Natural killer cell (primary cell): ENCODE measurements at regions of chr12 and their contacts with region 1.

Region 1: DNA sequence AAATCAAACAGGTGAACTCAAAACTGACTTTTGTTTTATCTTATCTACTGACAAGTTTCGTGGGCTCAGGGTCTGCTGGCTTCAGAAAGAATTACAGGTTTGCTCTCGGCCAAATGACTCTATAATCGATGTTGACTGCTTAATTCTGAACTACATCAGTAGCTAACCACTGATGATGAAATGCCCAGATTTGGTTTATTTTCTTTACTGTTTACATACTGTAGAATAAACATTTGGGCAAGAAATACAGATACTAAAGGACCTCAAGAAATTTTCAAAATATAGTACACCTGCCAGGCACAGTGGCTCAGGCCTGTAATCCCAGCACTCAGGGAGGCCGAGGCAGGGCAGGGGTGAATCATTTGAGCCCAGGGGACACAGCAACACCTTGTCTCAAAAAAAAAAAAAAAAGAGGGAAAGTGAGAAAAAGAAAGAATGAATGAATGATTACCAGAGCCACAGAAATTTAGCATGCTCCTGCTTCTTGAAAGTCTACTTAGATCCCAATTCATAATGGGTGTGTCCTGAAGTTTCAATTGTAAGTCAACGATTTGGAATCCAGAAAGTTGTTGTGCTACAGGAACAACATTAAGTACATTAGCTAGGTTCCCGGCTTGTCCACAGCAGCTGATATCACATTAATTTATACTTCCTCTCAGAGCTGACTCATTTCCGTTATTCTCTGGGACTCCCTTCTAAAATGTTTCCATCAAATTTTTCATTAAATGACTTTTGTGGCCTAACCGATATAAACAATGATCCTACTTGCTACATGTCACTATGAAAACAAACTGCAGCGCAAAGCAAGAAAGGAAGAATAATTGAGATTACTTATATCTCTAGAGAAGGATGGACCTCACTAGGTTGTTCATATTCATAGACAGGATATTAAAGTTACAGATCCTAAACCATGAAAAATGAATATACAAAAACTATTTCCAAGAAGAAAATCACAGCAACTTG is 134.3 kb downstream of the MED13L start:
- DNase-seq: peak in 1 of 2 donors; percentile 22
- ATAC-seq: peak in 2 of 3 donors; percentile 54 to 76
- H3K4me3 ChIP-seq: no peak overlapping the region
- H3K4me3 Mint-ChIP-seq: peak overlapping the region; percentile 80
- H3K27ac ChIP-seq: peak overlapping the region; percentile 22
- H3K27ac Mint-ChIP-seq: peak overlapping the region; percentile 80 to 81
- H3K4me1 ChIP-seq: peaks cover 13% of the 10 kb centered on the region
- H3K4me1 Mint-ChIP-seq: peaks cover 51 to 54% of the 10 kb centered on the region in 2 donors
- H3K27me3 ChIP-seq: no peaks in the 10 kb centered on the region
- H3K27me3 Mint-ChIP-seq: no peaks in the 10 kb centered on the region
- CTCF ChIP-seq: no peak

Region 2: DNA sequence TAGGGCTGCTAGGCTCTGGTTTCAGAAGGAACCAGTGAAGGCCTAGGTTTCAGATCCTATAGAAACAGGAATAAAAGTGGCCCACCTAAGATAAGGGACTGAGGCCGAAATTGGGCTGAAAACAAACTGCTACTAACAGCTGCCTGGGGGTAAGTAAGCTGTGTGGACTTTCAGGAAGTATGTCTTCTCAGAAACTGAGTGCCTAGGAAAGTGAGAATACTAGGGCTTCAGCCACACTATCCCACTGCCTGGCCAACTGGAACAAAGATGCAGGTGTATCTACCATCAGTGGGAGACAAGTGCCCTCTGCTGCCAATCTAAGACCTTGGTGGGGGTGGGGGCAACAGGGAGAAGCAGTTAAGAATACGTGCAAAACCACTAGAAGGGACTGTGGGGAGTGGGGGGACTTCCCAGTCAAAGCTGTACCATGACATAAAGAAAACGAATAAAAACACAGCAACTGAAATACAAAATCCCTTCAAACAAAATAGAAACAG is 51.8 kb after region 1 on chr12:
- intact Hi-C with region 1: loop called (anchors 5 kb)
- DNase-seq: peak; percentile 45 to 85
- ATAC-seq: peak; percentile 90 to 96 (median 93)
- H3K4me3 ChIP-seq: no peak overlapping the region
- H3K4me3 Mint-ChIP-seq: peak overlapping the region; percentile 28
- H3K27ac ChIP-seq: peak overlapping the region; percentile 34
- H3K27ac Mint-ChIP-seq: peak overlapping the region; percentile 59 to 86
- H3K4me1 ChIP-seq: peaks cover 15% of the 10 kb centered on the region
- H3K4me1 Mint-ChIP-seq: peaks cover 58% of the 10 kb centered on the region in 2 donors
- H3K27me3 ChIP-seq: no peaks in the 10 kb centered on the region
- H3K27me3 Mint-ChIP-seq: no peaks in the 10 kb centered on the region
- CTCF ChIP-seq: no peak